Sigmoid colon (tissue), 7 donors: ENCODE measurements at regions of chr17 and their contacts with region 1.

Region 1: DNA sequence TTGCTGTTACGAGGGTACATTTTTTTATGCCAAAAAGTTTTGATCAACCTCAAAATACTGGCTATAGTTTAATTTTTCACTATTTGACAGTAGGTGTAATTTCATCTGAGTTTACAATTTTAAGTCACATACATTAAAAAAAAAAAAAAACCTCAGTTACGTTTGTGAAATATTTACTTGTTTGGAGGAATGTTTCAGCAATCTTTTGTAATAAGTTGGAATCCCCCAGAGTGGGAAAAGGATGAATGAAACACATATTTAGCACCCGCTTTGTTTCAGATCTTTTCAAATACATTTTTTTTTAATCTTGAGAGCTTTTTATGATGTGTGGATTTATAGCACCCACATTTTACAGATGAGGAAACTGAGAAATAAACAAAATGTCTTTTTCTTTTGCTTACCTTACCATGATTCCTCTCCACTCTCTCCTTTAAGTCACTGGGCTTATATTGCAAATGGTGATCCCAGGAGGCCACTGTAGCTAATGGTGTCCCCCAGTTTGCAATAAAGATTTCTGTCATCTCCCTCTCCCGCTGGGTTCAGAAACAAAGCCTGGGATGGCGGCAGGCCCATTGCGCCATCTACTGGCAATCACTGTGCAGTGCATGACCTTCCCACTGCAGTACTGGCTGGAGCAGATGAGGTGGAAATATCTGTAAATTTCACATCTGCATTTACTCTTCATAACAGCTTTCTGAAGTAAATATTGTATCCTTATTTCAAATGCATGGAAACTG is 27.7 kb downstream of the TBC1D3B start:
- DNase-seq: peak; percentile 76
- H3K4me3 ChIP-seq: no peak overlapping the region
- H3K27ac ChIP-seq: peak overlapping the region in 1 of 4 donors; percentile 47
- H3K4me1 ChIP-seq: peaks cover 0 to 12% (median 7%) of the 10 kb centered on the region in 4 donors
- H3K27me3 ChIP-seq: peaks cover 0 to 13% (median 0%) of the 10 kb centered on the region in 3 donors
- CTCF ChIP-seq: peak; percentile 58 to 99 (median 98)
- EP300 ChIP-seq: no peak
- POLR2A ChIP-seq: no peak

Region 2: DNA sequence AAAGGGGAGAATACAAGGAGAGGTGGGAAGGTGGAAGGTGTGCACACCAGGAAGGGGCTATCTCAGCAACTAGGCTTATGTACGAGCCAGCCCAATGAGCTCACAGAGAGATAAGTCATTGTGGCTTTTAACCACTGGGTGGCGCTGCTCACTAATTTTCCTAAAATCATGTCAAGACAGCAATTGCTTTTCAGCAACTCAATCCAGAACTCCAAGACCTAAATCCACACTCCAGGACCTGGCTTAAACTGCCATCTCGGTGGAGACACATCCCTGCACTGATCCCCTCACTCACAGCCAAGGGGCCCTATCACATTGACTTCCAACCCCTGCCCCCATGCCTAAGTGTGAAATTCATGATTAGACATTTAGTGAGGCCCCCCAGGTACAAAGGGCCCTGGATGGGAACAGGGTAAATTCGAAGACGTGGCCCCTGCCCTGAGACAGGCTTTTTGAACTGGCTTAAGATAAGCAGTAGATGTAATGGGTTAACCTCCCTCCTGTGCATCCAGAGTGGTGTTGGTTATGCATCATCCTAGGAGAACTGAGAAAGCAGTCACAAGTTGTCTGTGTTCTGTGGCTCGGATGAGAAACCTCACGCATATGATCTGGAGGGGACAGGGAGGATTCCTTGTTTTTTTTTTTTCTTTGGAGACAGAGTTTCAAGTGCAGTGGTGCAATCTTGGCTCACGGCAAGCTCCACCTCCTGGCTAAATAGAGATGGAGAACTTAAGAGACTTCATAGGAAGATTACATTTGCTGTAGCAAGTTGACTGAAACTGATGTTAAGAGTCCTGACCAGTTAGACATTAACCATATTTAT is 179.0 kb before region 1 on chr17:
- intact Hi-C with region 1: loop called (anchors 1 kb)
- DNase-seq: peak; percentile 83
- H3K4me3 ChIP-seq: no peak overlapping the region
- H3K27ac ChIP-seq: no peak overlapping the region
- H3K4me1 ChIP-seq: no peaks in the 10 kb centered on the region
- H3K27me3 ChIP-seq: no peaks in the 10 kb centered on the region
- CTCF ChIP-seq: peak; percentile 33 to 72 (median 69)
- EP300 ChIP-seq: no peak
- POLR2A ChIP-seq: no peak

Region 3: GRCh38 chr17:36095992-36096391 is 52.7 kb before region 1 on chr17:
- intact Hi-C with region 1: no loop called
- DNase-seq: no peak
- H3K4me3 ChIP-seq: no peak overlapping the region
- H3K27ac ChIP-seq: no peak overlapping the region
- H3K4me1 ChIP-seq: no peaks in the 10 kb centered on the region
- H3K27me3 ChIP-seq: no peaks in the 10 kb centered on the region
- CTCF ChIP-seq: no peak
- EP300 ChIP-seq: no peak
- POLR2A ChIP-seq: no peak

Region 4: GRCh38 chr17:36107660-36108059 is 41.1 kb before region 1 on chr17:
- intact Hi-C with region 1: no loop called
- DNase-seq: no peak
- H3K4me3 ChIP-seq: no peak overlapping the region
- H3K27ac ChIP-seq: no peak overlapping the region
- H3K4me1 ChIP-seq: no peaks in the 10 kb centered on the region
- H3K27me3 ChIP-seq: no peaks in the 10 kb centered on the region
- CTCF ChIP-seq: no peak
- EP300 ChIP-seq: no peak
- POLR2A ChIP-seq: no peak

Region 5: GRCh38 chr17:36198831-36199465 is 50.2 kb after region 1 on chr17:
- intact Hi-C with region 1: no loop called
- DNase-seq: no peak
- H3K4me3 ChIP-seq: no peak overlapping the region
- H3K27ac ChIP-seq: no peak overlapping the region
- H3K4me1 ChIP-seq: peaks cover 0 to 10% (median 0%) of the 10 kb centered on the region in 4 donors
- H3K27me3 ChIP-seq: peaks cover 0 to 20% (median 5%) of the 10 kb centered on the region in 3 donors
- CTCF ChIP-seq: no peak
- EP300 ChIP-seq: no peak
- POLR2A ChIP-seq: no peak